Mammary epithelial cell (primary cell): ENCODE measurements at regions of chr9 and their contacts with region 1.

Region 1: GRCh38 chr9:5593904-5594303 is 35.0 kb upstream of the RIC1 start:
- DNase-seq: no peak
- H3K4me3 ChIP-seq: no peak overlapping the region
- H3K27ac ChIP-seq: no peak overlapping the region
- H3K4me1 ChIP-seq: no peaks in the 10 kb centered on the region
- H3K27me3 ChIP-seq: no peaks in the 10 kb centered on the region
- CTCF ChIP-seq: no peak

Region 2: DNA sequence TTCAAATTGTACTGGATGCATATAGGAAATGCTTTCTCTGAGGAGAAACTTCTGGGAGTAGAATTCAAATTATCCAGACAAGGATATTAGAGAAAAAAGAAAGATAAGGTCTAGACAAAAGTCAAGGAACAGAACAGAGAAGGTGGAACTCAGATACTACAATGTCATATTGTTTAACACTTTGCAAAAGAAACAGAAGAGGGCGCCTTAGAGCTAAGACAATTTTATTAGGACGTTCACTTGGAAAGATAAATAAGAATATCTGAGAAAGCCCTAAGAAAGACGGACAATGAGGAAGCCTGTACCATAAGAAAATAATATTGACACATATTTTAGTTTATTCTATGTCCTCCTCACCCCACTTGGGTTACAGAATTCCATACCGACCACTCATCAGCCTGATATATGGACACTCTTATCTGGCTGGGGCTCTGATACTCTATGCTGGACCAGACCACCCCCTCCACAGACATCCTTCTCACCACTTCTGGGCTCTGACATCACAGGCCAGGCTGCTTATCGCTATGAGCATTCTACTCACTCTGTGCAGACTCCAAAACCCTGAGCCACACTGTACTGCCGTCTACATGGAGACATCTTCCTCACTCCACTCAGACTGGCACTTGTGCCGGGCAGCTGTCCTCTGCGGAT is 843.8 kb before region 1 on chr9:
- CTCF ChIA-PET with region 1: no interaction called
- dilution Hi-C with region 1: no loop called
- in situ Hi-C with region 1: loop called (anchors 25 kb)
- intact Hi-C with region 1: loop called (anchors 5 kb)
- DNase-seq: peak; percentile 29
- H3K4me3 ChIP-seq: no peak overlapping the region
- H3K27ac ChIP-seq: no peak overlapping the region
- H3K4me1 ChIP-seq: no peaks in the 10 kb centered on the region
- H3K27me3 ChIP-seq: no peaks in the 10 kb centered on the region
- CTCF ChIP-seq: peak; percentile 61 to 65

Region 3: DNA sequence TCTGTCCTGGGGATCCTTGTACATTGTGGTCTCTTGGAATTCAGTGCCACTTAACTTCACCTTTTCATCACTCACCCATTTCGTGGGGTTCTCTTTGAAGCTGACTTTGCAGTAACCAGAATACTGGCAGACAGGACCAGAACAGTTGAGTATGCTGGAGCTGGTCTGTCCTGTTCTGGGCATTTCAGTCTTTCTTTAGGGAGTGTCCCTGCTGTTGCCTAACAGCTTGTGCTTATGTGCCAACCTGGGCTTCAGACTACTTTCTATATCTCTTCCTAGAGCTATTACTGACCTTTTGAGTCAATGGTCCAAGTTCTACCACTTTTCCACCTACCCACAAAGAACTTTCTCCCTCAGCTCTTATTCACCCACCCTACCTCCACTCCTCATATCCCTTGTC is 398.5 kb before region 1 on chr9:
- CTCF ChIA-PET with region 1: no interaction called
- dilution Hi-C with region 1: no loop called
- in situ Hi-C with region 1: loop called in 1 of 2 experiments (anchors 10 kb)
- intact Hi-C with region 1: no loop called
- DNase-seq: peak; percentile 28
- H3K4me3 ChIP-seq: no peak overlapping the region
- H3K27ac ChIP-seq: no peak overlapping the region
- H3K4me1 ChIP-seq: no peaks in the 10 kb centered on the region
- H3K27me3 ChIP-seq: peaks cover 2% of the 10 kb centered on the region
- CTCF ChIP-seq: no peak

Region 4: DNA sequence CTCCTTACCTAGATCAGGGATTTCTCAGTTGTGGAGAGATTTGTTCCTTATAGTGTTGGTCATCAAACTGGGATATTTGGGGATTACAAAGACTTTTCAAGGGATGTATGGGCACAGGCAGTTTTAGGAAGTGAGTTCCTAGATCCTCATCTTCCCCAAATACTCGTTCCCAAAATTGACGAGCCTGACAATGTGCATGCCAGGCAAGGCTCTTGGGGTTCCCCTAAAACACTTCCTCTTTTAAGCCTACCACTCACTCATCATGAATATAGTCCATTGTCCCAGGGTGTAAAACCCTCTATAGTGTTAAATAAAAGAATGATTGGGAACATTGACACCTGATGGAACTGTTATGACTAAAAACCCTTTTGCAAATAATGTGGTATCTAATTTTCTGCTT is 57.2 kb before region 1 on chr9:
- CTCF ChIA-PET with region 1: no interaction called
- dilution Hi-C with region 1: no loop called
- in situ Hi-C with region 1: no loop called
- intact Hi-C with region 1: no loop called
- DNase-seq: no peak
- H3K4me3 ChIP-seq: no peak overlapping the region
- H3K27ac ChIP-seq: no peak overlapping the region
- H3K4me1 ChIP-seq: no peaks in the 10 kb centered on the region
- H3K27me3 ChIP-seq: no peaks in the 10 kb centered on the region
- CTCF ChIP-seq: no peak

Region 5: DNA sequence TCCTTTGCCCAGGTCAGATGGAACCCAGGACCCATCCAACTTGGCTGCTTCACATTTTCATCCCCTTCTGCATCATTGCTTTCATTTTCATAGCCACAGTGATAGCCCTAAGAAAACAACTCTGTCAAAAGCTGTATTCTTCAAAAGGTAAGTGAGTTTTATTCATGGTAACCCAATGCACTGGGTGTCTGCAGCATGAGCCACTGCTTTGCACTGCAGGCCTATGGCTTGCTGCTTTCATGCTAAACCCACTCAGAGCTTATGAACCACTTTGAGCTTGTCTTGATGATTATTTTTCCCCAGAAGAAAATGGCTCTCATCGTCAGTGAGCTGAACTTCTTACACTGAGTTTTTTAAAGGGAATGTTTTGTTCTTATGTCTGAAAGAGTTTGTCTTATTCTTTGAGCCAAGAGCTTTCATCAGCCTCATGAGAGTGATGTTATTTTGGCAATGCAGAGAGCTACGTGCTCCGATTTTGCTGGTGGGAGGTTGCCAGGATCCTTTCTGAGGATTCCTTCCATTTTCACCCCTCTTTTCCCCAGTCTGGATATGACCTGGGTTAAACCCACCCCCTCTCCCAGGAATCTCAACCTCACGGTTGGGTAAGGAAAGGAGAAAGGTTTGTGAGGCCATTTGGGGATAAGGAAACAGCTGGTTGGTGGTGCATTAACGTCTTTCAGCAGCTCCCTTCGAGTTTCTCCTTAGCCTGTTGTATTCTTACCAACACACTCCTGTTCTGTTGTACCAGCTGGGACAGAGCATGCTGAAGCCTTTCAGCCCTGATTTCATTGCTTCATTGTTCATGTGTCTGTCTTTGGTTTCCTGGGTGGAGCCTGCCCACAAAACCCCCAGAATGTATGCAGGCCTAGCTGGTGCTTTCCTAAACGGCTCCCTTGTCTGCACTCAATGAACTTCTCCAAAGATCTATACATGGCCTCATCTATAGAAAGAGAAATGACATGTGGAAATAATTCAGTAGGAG is 36.0 kb before region 1 on chr9:
- CTCF ChIA-PET with region 1: no interaction called
- dilution Hi-C with region 1: no loop called
- in situ Hi-C with region 1: no loop called
- intact Hi-C with region 1: no loop called
- DNase-seq: peak; percentile 53
- H3K4me3 ChIP-seq: no peak overlapping the region
- H3K27ac ChIP-seq: no peak overlapping the region
- H3K4me1 ChIP-seq: peaks cover 13% of the 10 kb centered on the region
- H3K27me3 ChIP-seq: no peaks in the 10 kb centered on the region
- CTCF ChIP-seq: no peak